Sciatic nerve (tissue), 2 donors: ENCODE measurements at regions of chr6 and their contacts with region 1.

Region 1: GRCh38 chr6:148166339-148166968 is 176.2 kb upstream of the SASH1 start:
- DNase-seq: no peak
- ATAC-seq: peak; percentile 61

Region 2: DNA sequence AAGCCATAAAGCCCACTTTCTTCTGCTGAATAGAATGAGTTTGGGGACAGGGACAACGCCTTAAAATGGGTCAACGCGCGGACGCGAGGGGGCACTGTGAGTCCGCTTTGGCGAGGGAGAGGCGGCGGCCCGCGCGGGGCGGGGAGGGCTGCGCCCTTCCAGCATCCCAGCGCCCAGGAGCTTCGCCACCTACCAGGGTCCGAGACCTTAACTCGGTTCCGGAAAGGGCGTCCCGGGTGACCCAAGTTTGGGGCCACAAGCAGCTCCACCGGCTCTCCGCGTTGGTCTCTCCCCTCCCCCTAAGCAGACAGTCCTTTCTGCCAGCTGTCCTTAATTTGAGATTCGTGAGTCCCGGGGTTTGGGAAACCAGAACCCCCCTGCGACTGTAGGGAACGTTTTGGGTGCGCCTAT is 659.7 kb before region 1 on chr6:
- intact Hi-C with region 1: loop called (anchors 5 kb)
- DNase-seq: peak; percentile 88
- ATAC-seq: peak; percentile 86

Region 3: DNA sequence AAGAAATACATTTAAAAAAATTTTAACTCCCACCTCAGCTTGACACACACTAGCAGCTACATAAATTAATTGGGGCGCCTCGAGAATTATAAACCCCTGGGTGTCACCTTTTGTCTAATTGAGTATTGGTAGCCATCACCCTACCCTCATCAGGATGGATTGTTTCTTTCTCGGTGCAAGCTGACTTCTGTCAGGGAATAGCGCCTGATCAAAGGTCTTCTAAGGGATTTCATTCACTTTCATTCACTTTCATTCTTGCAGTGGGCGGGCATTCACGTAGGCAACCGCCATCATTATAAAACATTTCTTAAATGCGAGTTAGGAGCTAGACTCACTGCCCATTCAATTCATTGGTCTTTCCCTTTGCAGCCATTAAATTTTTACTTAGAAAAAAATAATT is 63.0 kb before region 1 on chr6:
- intact Hi-C with region 1: no loop called
- DNase-seq: no peak
- ATAC-seq: no peak